HEK293 (cell line): ENCODE measurements at regions of chr1 and their contacts with region 1.

Region 1: DNA sequence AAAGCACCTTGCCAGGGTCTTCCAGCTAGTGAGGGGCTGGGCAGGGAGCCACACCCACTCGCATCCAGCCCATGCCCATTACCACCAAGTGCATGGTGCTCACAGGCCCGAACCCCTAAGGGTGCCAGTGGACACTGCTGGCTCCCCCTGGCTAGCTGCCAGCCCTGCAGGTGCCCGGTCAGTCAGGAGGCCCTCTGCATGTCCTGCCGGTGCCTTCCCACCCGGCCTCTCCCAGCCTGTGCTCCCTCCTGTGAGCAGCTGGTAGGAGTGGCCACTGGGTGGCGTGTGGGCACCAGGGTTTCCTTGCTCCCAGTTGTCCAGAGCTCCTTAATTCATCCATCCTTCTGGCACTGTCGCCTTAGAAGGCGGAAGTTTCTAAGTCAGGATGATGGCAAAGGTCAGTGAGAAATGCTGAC is 33.4 kb downstream of the QSOX1 start:
- H3K4me3 ChIP-seq: no peak overlapping the region
- H3K27ac ChIP-seq: no peak overlapping the region
- H3K4me1 ChIP-seq: no peaks in the 10 kb centered on the region
- CTCF ChIP-seq: peak; percentile 92

Region 2: DNA sequence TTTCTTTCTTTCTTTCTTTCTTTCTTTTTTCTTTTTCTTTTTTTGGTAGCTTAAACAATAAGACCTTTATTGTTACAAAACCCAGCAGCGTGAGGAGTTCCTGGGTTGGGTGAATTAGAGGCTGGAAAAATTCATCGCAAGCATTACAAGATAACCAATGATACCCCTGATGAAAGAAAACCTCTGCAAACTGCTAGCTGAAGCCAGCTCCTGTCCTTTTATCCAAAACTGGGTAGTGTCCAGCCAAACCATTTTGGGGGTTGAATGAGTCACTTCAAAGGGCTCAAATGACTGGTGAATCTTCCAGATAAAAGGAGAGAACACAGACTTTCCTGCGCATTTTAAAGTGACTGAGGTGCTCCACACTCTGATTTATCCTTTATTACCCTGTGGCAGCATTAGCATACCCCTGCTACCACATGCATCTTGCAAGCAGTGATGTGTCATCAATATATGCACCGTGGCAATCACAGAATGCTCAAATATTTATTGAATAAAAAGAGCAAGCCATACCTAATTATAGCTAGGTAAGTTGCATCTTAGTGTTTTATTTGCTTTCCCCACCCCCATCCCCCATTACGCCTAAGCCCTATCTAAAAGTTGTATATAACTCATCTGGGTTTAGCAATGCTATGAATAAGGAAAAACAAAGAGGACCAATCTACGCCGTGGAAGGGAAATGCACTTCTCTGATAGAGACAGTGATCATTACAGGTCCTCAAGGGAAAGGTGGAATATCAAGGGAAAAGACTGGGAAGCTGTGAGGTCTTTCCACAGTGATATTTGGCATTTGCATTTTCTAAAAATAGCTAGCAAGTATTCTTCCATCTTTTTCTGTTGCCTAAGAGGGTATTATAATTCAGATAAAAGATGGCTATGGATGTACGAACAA is 265.9 kb before region 1 on chr1:
- CTCF ChIA-PET with region 1: no interaction called
- POLR2A ChIA-PET with region 1: no interaction called
- H3K4me3 ChIP-seq: no peak overlapping the region
- H3K27ac ChIP-seq: no peak overlapping the region
- H3K4me1 ChIP-seq: peaks cover 12% of the 10 kb centered on the region
- CTCF ChIP-seq: no peak

Region 3: DNA sequence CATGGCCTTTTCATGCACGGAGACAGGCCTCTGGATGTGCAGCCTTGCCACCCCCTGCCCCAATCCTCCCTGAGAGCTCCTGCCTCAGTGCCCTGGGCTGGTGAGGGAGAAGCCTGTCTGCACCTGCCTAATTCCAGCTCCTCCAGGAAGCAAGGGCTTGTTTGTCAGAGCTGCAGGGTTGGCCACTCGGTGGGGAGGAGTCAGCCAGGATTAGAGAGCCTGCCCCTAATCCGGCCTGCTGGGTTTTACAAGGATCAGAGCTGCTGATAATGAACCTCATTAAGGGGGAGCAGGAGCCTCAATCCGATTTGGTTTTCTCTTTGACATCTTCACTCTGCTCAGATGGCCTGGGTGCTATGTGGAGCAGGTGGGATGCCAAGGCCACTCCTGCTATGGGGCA is 10.1 kb after region 1 on chr1:
- CTCF ChIA-PET with region 1: interaction called, 15 read pairs
- POLR2A ChIA-PET with region 1: no interaction called
- H3K4me3 ChIP-seq: no peak overlapping the region
- H3K27ac ChIP-seq: no peak overlapping the region
- H3K4me1 ChIP-seq: no peaks in the 10 kb centered on the region
- CTCF ChIP-seq: no peak

Region 4: GRCh38 chr1:180252638-180253536 is 64.8 kb after region 1 on chr1:
- CTCF ChIA-PET with region 1: interaction called, 22 read pairs
- POLR2A ChIA-PET with region 1: no interaction called
- H3K4me3 ChIP-seq: no peak overlapping the region
- H3K27ac ChIP-seq: no peak overlapping the region
- H3K4me1 ChIP-seq: no peaks in the 10 kb centered on the region
- CTCF ChIP-seq: peak; percentile 82

Region 5: DNA sequence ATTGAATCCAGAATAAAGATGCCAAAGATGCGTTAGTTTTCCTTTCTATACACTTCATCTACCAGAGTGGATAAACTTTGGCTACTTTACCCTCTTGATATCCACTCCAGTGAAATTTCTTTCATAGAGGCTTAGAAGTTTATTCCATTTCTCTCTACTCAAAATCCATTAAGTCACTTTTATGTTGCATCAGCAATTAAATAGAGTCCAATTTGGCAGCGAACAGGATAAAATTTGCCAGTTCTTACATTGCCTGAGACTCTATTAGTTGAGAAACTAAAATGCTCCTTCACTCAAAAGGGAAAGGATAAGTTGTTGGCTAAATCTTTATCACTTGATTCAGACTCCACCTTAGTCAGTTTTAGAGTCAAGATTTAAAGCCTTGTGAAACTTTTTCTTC is 256.4 kb after region 1 on chr1:
- CTCF ChIA-PET with region 1: no interaction called
- POLR2A ChIA-PET with region 1: no interaction called
- H3K4me3 ChIP-seq: no peak overlapping the region
- H3K27ac ChIP-seq: no peak overlapping the region
- H3K4me1 ChIP-seq: no peaks in the 10 kb centered on the region
- CTCF ChIP-seq: no peak

Region 6: DNA sequence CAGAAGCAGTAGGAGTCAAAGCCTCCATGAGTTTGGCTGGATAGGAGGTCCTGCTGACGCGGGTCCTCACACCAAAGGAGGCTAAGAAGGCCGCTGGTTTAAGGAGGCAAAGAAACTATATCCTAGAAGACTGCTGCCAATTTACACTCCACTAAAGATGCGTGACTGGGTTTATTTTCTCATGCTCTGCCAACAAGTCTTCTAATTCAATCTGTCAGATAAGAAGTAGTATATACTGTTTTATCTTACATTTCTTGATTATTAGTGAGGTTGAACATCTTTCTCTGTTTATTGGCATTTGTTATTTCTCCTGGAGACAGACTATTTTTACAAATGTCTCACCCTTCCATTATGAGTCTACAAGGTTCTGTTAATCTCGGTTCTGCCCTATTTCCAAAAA is 280.2 kb after region 1 on chr1:
- CTCF ChIA-PET with region 1: interaction called, 11 read pairs
- POLR2A ChIA-PET with region 1: no interaction called
- H3K4me3 ChIP-seq: no peak overlapping the region
- H3K27ac ChIP-seq: no peak overlapping the region
- H3K4me1 ChIP-seq: peaks cover 10% of the 10 kb centered on the region; the same call in 1 of the 2 replicates
- CTCF ChIP-seq: no peak